ENCODE measurements at regions of chr17 and their contacts with region 1.

Region 1: DNA sequence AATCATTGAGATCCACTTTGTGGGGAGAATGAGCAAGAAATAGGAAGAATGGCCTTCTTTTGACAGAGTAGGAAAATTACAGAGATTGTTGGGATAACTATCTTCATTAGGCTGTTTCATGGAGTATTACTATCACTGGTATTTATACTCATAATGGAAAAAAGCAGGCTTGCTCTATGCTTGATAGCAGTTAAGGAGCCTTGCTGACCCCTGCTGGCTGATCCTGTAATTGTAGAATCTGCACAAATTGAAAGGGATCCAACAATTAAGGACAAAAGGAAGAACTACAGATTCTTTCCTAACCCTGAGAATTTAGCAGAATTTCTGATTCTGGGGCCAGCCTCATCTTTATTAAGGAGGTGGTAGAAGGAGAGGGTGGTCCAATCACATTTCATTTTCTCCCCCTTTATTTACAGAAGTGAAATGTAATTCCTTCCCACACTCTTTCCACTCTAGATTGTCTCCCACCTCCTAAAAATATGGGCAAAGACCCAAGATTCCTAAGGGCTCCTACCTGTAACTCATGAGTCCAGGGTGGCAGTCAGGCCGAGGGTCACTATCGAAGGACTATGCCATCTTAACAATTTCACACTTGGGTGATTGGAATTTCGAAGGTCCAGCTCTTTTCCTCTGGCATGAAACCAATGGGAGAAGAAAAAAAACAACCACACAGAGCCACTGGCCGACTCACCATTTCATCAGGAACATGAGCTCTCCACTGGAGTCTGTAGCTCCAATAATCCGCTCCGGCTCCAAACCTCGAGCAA is 26.3 kb downstream of the NFE2L1 start:
- DNase-seq: peak in 1 of 2 donors; percentile 85
- H3K4me3 ChIP-seq: no peak overlapping the region
- CTCF ChIP-seq: peak in 1 of 3 donors; percentile 91
- POLR2A ChIP-seq: no peak

Region 2: DNA sequence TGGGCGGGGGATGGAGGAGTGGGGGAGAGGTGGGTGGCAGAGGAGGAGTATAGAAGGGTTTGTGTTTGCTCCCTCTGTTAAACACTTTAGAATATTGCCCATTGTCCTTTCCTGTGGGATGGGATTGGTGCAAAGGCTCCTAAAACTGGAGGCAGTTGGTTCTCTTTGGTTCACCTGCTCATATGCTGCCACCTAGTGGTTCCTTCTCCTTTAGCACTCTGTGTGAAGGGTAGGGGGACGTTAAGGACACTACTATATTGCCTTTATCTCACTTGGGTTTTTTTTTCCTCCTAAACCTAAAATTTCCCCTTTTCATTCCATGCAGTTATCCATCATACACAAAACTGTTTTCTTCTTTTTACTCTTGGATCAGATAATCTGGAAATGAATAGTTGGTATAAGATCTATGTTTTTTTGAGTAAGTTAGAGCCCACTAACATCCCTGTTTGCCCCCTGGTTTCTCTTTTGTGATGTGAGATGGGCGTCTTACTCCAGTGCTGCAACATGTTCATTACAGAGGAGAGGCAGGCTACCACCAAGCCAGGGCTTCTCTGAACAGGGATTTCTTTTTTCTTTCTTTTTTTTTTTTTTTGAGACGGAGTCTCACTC is 56.8 kb after region 1 on chr17:
- intact Hi-C with region 1: loop called (anchors 5 kb)
- DNase-seq: peak; percentile 52 to 63
- H3K4me3 ChIP-seq: no peak overlapping the region
- CTCF ChIP-seq: no peak
- POLR2A ChIP-seq: no peak